B cell (primary cell): ENCODE measurements at regions of chr17 and their contacts with region 1.

Region 1: GRCh38 chr17:77391668-77392375 is 251.1 kb downstream of the SEC14L1 start:
- DNase-seq: no peak
- ATAC-seq: no peak
- H3K4me3 ChIP-seq: no peak overlapping the region
- H3K4me3 Mint-ChIP-seq: no peak overlapping the region
- H3K27ac ChIP-seq: no peak overlapping the region
- H3K27ac Mint-ChIP-seq: peak overlapping the region; percentile 37
- H3K4me1 ChIP-seq: peaks cover 27 to 46% of the 10 kb centered on the region in 2 donors
- H3K4me1 Mint-ChIP-seq: peaks cover 36% of the 10 kb centered on the region
- H3K27me3 ChIP-seq: no peaks in the 10 kb centered on the region
- H3K27me3 Mint-ChIP-seq: no peaks in the 10 kb centered on the region
- CTCF ChIP-seq: no peak

Region 2: DNA sequence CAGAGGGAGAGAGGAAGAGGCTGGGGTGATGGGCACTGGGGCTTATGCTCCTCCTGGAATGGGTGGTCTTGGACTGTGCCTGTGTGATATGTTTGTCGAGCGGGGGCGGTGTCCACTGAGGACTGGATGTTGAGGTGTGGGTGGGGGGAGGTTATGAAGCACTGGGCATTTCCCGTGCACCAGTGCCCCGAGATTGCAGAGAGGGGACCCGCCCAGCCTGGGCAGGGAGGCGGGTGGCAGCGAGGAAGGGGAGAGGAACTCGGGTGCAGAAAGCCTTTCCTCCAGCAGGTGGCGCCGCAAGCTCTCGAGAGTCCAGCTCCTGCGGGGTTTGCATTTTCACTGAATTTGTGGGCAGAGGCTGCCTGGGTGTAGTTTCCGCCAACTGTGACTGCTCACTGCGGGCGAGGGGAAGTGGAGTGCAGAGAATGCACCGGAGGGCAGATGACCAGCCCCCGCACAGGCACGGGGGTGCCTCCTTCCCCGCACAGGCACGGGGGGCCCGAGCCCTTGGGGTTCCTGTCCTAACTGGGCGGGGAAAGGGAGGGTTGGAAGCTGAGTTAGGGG is 60.4 kb before region 1 on chr17:
- CTCF ChIA-PET with region 1: interaction called, 11 read pairs
- POLR2A ChIA-PET with region 1: no interaction called
- intact Hi-C with region 1: no loop called
- DNase-seq: peak; percentile 94
- ATAC-seq: peak; percentile 89
- H3K4me3 ChIP-seq: peak overlapping the region in 4 of 5 experiments; percentile 21 to 65 (median 36)
- H3K4me3 Mint-ChIP-seq: peak overlapping the region; percentile 82
- H3K27ac ChIP-seq: peak overlapping the region; percentile 67 to 77
- H3K27ac Mint-ChIP-seq: peak overlapping the region; percentile 85
- H3K4me1 ChIP-seq: peaks cover 41 to 66% of the 10 kb centered on the region in 2 donors
- H3K4me1 Mint-ChIP-seq: peaks cover 53% of the 10 kb centered on the region
- H3K27me3 ChIP-seq: no peaks in the 10 kb centered on the region
- H3K27me3 Mint-ChIP-seq: no peaks in the 10 kb centered on the region
- CTCF ChIP-seq: peak; percentile 93

Region 3: GRCh38 chr17:77365584-77366186 is 26.1 kb before region 1 on chr17:
- CTCF ChIA-PET with region 1: interaction called, 3 read pairs
- POLR2A ChIA-PET with region 1: interaction called, 12 read pairs
- intact Hi-C with region 1: no loop called
- DNase-seq: no peak
- ATAC-seq: no peak
- H3K4me3 ChIP-seq: no peak overlapping the region
- H3K4me3 Mint-ChIP-seq: no peak overlapping the region
- H3K27ac ChIP-seq: no peak overlapping the region
- H3K27ac Mint-ChIP-seq: no peak overlapping the region
- H3K4me1 ChIP-seq: peaks cover 38 to 51% of the 10 kb centered on the region in 2 donors
- H3K4me1 Mint-ChIP-seq: peaks cover 45% of the 10 kb centered on the region
- H3K27me3 ChIP-seq: no peaks in the 10 kb centered on the region
- H3K27me3 Mint-ChIP-seq: peaks cover 4% of the 10 kb centered on the region
- CTCF ChIP-seq: no peak

Region 4: DNA sequence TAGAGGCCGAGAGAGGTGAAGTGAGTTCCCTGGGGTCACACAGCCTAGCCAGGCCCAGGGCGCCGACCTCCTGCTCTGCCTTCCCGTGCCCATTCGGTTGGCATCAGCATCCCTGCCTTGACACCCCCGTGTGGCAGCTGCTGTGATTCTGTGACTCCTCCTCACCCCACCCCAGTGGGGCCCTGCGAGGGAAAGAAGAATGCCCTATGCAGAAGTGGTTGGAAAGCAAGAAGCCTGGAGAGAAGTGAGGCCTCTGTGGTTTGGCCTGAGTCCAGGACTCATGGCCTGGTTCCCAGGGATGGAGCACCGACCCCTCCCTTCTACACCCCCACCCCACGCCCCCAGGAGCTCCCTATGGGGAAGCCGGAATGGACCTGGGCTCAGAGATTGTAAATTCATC is 45.2 kb after region 1 on chr17:
- CTCF ChIA-PET with region 1: no interaction called
- POLR2A ChIA-PET with region 1: interaction called, 10 read pairs
- intact Hi-C with region 1: no loop called
- DNase-seq: peak; percentile 66
- ATAC-seq: no peak
- H3K4me3 ChIP-seq: no peak overlapping the region
- H3K4me3 Mint-ChIP-seq: peak overlapping the region; percentile 69
- H3K27ac ChIP-seq: peak overlapping the region; percentile 96 to 97
- H3K27ac Mint-ChIP-seq: peak overlapping the region; percentile 98
- H3K4me1 ChIP-seq: peaks cover 98 to 100% of the 10 kb centered on the region in 2 donors
- H3K4me1 Mint-ChIP-seq: peaks cover 89% of the 10 kb centered on the region
- H3K27me3 ChIP-seq: no peaks in the 10 kb centered on the region
- H3K27me3 Mint-ChIP-seq: no peaks in the 10 kb centered on the region
- CTCF ChIP-seq: no peak

Region 5: GRCh38 chr17:77451245-77451893 is 59.5 kb after region 1 on chr17:
- CTCF ChIA-PET with region 1: no interaction called
- POLR2A ChIA-PET with region 1: interaction called, 12 read pairs
- intact Hi-C with region 1: no loop called
- DNase-seq: peak; percentile 70
- ATAC-seq: peak; percentile 59
- H3K4me3 ChIP-seq: peak overlapping the region; percentile 91 to 96 (median 92)
- H3K4me3 Mint-ChIP-seq: peak overlapping the region; percentile 93
- H3K27ac ChIP-seq: peak overlapping the region; percentile 66 to 96
- H3K27ac Mint-ChIP-seq: peak overlapping the region; percentile 96
- H3K4me1 ChIP-seq: peaks cover 67 to 86% of the 10 kb centered on the region in 2 donors
- H3K4me1 Mint-ChIP-seq: peaks cover 69% of the 10 kb centered on the region
- H3K27me3 ChIP-seq: no peaks in the 10 kb centered on the region
- H3K27me3 Mint-ChIP-seq: no peaks in the 10 kb centered on the region
- CTCF ChIP-seq: no peak

Region 6: GRCh38 chr17:78689029-78689428 is 1297.2 kb after region 1 on chr17:
- CTCF ChIA-PET with region 1: no interaction called
- POLR2A ChIA-PET with region 1: no interaction called
- intact Hi-C with region 1: no loop called
- DNase-seq: no peak
- ATAC-seq: no peak
- H3K4me3 ChIP-seq: no peak overlapping the region
- H3K4me3 Mint-ChIP-seq: no peak overlapping the region
- H3K27ac ChIP-seq: no peak overlapping the region
- H3K27ac Mint-ChIP-seq: no peak overlapping the region
- H3K4me1 ChIP-seq: no peaks in the 10 kb centered on the region
- H3K4me1 Mint-ChIP-seq: peaks cover 9% of the 10 kb centered on the region
- H3K27me3 ChIP-seq: no peaks in the 10 kb centered on the region
- H3K27me3 Mint-ChIP-seq: no peaks in the 10 kb centered on the region
- CTCF ChIP-seq: peak; percentile 39